ENCODE measurements at regions of chr11 and their contacts with region 1.

Region 1: GRCh38 chr11:33829433-33830141 is 55.3 kb upstream of the FBXO3 start:
- DNase-seq: peak; percentile 77
- H3K4me3 Mint-ChIP-seq: peak overlapping the region; percentile 58
- H3K27ac Mint-ChIP-seq: no peak overlapping the region
- H3K4me1 Mint-ChIP-seq: peaks cover 3% of the 10 kb centered on the region
- H3K27me3 Mint-ChIP-seq: peaks cover 45% of the 10 kb centered on the region

Region 2: GRCh38 chr11:33362051-33362910 is 467.3 kb before region 1 on chr11:
- CTCF ChIA-PET with region 1: interaction called, 9 read pairs
- POLR2A ChIA-PET with region 1: no interaction called
- intact Hi-C with region 1: loop called (anchors 1 kb)
- DNase-seq: no peak
- H3K4me3 Mint-ChIP-seq: no peak overlapping the region
- H3K27ac Mint-ChIP-seq: no peak overlapping the region
- H3K4me1 Mint-ChIP-seq: peaks cover 2% of the 10 kb centered on the region
- H3K27me3 Mint-ChIP-seq: peaks cover 2% of the 10 kb centered on the region

Region 3: GRCh38 chr11:33542921-33543320 is 286.7 kb before region 1 on chr11:
- CTCF ChIA-PET with region 1: interaction called, 4 read pairs
- POLR2A ChIA-PET with region 1: no interaction called
- intact Hi-C with region 1: loop called (anchors 2 kb)
- DNase-seq: peak; percentile 52
- H3K4me3 Mint-ChIP-seq: no peak overlapping the region
- H3K27ac Mint-ChIP-seq: no peak overlapping the region
- H3K4me1 Mint-ChIP-seq: no peaks in the 10 kb centered on the region
- H3K27me3 Mint-ChIP-seq: peaks cover 29% of the 10 kb centered on the region

Region 4: GRCh38 chr11:33716236-33716635 is 113.4 kb before region 1 on chr11:
- CTCF ChIA-PET with region 1: interaction called, 5 read pairs
- POLR2A ChIA-PET with region 1: no interaction called
- intact Hi-C with region 1: loop called (anchors 5 kb)
- DNase-seq: no peak
- H3K4me3 Mint-ChIP-seq: no peak overlapping the region
- H3K27ac Mint-ChIP-seq: no peak overlapping the region
- H3K4me1 Mint-ChIP-seq: peaks cover 2% of the 10 kb centered on the region
- H3K27me3 Mint-ChIP-seq: no peaks in the 10 kb centered on the region

Region 5: GRCh38 chr11:33808228-33808828 is 21.3 kb before region 1 on chr11:
- CTCF ChIA-PET with region 1: interaction called, 102 read pairs
- POLR2A ChIA-PET with region 1: no interaction called
- intact Hi-C with region 1: loop called (anchors 1 kb)
- DNase-seq: peak; percentile 89
- H3K4me3 Mint-ChIP-seq: no peak overlapping the region
- H3K27ac Mint-ChIP-seq: no peak overlapping the region
- H3K4me1 Mint-ChIP-seq: peaks cover 1% of the 10 kb centered on the region
- H3K27me3 Mint-ChIP-seq: peaks cover 6% of the 10 kb centered on the region

Region 6: GRCh38 chr11:33959855-33960400 is 130.3 kb after region 1 on chr11:
- CTCF ChIA-PET with region 1: no interaction called
- POLR2A ChIA-PET with region 1: no interaction called
- intact Hi-C with region 1: no loop called
- DNase-seq: no peak
- H3K4me3 Mint-ChIP-seq: no peak overlapping the region
- H3K27ac Mint-ChIP-seq: no peak overlapping the region
- H3K4me1 Mint-ChIP-seq: no peaks in the 10 kb centered on the region
- H3K27me3 Mint-ChIP-seq: peaks cover 12% of the 10 kb centered on the region

Region 7: GRCh38 chr11:34161812-34162499 is 332.4 kb after region 1 on chr11:
- CTCF ChIA-PET with region 1: no interaction called
- POLR2A ChIA-PET with region 1: no interaction called
- intact Hi-C with region 1: no loop called
- DNase-seq: peak; percentile 72
- H3K4me3 Mint-ChIP-seq: no peak overlapping the region
- H3K27ac Mint-ChIP-seq: no peak overlapping the region
- H3K4me1 Mint-ChIP-seq: peaks cover 14% of the 10 kb centered on the region
- H3K27me3 Mint-ChIP-seq: no peaks in the 10 kb centered on the region